ENCODE measurements at regions of chr11 and their contacts with region 1.

Region 1: GRCh38 chr11:125404776-125405435 is 91.2 kb downstream of the FEZ1 start:
- DNase-seq: no peak
- ATAC-seq: peak; percentile 97
- H3K4me3 ChIP-seq: no peak overlapping the region
- H3K27ac ChIP-seq: no peak overlapping the region
- H3K4me1 ChIP-seq: no peaks in the 10 kb centered on the region
- H3K27me3 ChIP-seq: peaks cover 4 to 12% of the 10 kb centered on the region in 2 experiments
- CTCF ChIP-seq: peak; percentile 89 to 98 (median 92)
- EP300 ChIP-seq: no peak
- POLR2A ChIP-seq: no peak
- RAD21 ChIP-seq: peak; percentile 75

Region 2: GRCh38 chr11:124961972-124962609 is 442.8 kb before region 1 on chr11:
- CTCF ChIA-PET with region 1: interaction called, 3 read pairs
- POLR2A ChIA-PET with region 1: no interaction called
- RAD21 ChIA-PET with region 1: no interaction called
- SMC1A ChIA-PET with region 1: interaction called, 3 read pairs
- in situ Hi-C with region 1: no loop called
- intact Hi-C with region 1: loop called (anchors 5 kb)
- DNase-seq: peak; percentile 51
- ATAC-seq: peak; percentile 97
- H3K4me3 ChIP-seq: no peak overlapping the region
- H3K27ac ChIP-seq: no peak overlapping the region
- H3K4me1 ChIP-seq: no peaks in the 10 kb centered on the region
- H3K27me3 ChIP-seq: no peaks in the 10 kb centered on the region
- CTCF ChIP-seq: peak; percentile 67 to 91 (median 74); a peak in 5 of 6 replicates
- EP300 ChIP-seq: no peak
- POLR2A ChIP-seq: no peak
- RAD21 ChIP-seq: peak; percentile 97

Region 3: GRCh38 chr11:125164422-125165110 is 240.3 kb before region 1 on chr11 and contains the start of gene PKNOX2:
- CTCF ChIA-PET with region 1: interaction called, 3 read pairs
- POLR2A ChIA-PET with region 1: no interaction called
- RAD21 ChIA-PET with region 1: no interaction called
- SMC1A ChIA-PET with region 1: no interaction called
- in situ Hi-C with region 1: no loop called
- intact Hi-C with region 1: loop called (anchors 5 kb)
- DNase-seq: no peak
- ATAC-seq: peak; percentile 76
- H3K4me3 ChIP-seq: no peak within 1 kb of the TSS
- H3K27ac ChIP-seq: no peak within 1 kb of the TSS
- H3K4me1 ChIP-seq: no peaks in the 10 kb centered on the region; the same call in 1 of the 2 replicates
- H3K27me3 ChIP-seq: peaks cover 24 to 33% of the 10 kb centered on the region in 2 experiments
- CTCF ChIP-seq: peak in 2 of 3 experiments; percentile 36 to 39; a peak in 3 of 6 replicates
- EP300 ChIP-seq: no peak
- POLR2A ChIP-seq: no peak
- RAD21 ChIP-seq: no peak
- polyA plus RNA-seq, gene PKNOX2: not detected

Region 4: GRCh38 chr11:125364121-125364826 is 40.6 kb before region 1 on chr11:
- CTCF ChIA-PET with region 1: interaction called, 31 read pairs
- POLR2A ChIA-PET with region 1: interaction called, 9 read pairs
- RAD21 ChIA-PET with region 1: interaction called, 37 read pairs
- SMC1A ChIA-PET with region 1: interaction called, 12 read pairs
- in situ Hi-C with region 1: no loop called
- intact Hi-C with region 1: no loop called
- DNase-seq: no peak
- ATAC-seq: peak; percentile 36; the same call in 2 of the 3 replicates
- H3K4me3 ChIP-seq: no peak overlapping the region
- H3K27ac ChIP-seq: no peak overlapping the region
- H3K4me1 ChIP-seq: no peaks in the 10 kb centered on the region
- H3K27me3 ChIP-seq: peaks cover 2% of the 10 kb centered on the region in 2 experiments; a peak in 2 of 4 replicates
- CTCF ChIP-seq: no peak
- EP300 ChIP-seq: no peak
- POLR2A ChIP-seq: no peak
- RAD21 ChIP-seq: no peak

Region 5: GRCh38 chr11:125393331-125393730 is 11.6 kb before region 1 on chr11:
- CTCF ChIA-PET with region 1: interaction called, 11 read pairs
- POLR2A ChIA-PET with region 1: no interaction called
- RAD21 ChIA-PET with region 1: no interaction called
- SMC1A ChIA-PET with region 1: interaction called, 9 read pairs
- in situ Hi-C with region 1: no loop called
- intact Hi-C with region 1: no loop called
- DNase-seq: no peak
- ATAC-seq: peak; percentile 55
- H3K4me3 ChIP-seq: no peak overlapping the region
- H3K27ac ChIP-seq: no peak overlapping the region
- H3K4me1 ChIP-seq: no peaks in the 10 kb centered on the region; the same call in 1 of the 2 replicates
- H3K27me3 ChIP-seq: peaks cover 1 to 3% of the 10 kb centered on the region in 2 experiments; a peak in 3 of 4 replicates
- CTCF ChIP-seq: peak in 2 of 3 experiments; percentile 29 to 30; a peak in 4 of 6 replicates
- EP300 ChIP-seq: no peak
- POLR2A ChIP-seq: no peak
- RAD21 ChIP-seq: no peak